Dendritic cell treated with granulocyte-macrophage colony-stimulating factor and Interleukin-4, amounts not matched to agents 40 ng/mL and 50 ng/mL, for 4 days (primary cell): ENCODE measurements at regions of chr22 and their contacts with region 1.

Region 1: GRCh38 chr22:31345331-31346254 is 553 bp downstream of the PATZ1 start:
- H3K4me3 Mint-ChIP-seq: peak overlapping the region; percentile 85
- H3K27ac Mint-ChIP-seq: peak overlapping the region; percentile 91
- H3K4me1 Mint-ChIP-seq: peaks cover 56% of the 10 kb centered on the region
- H3K27me3 Mint-ChIP-seq: peaks cover 9% of the 10 kb centered on the region

Region 2: DNA sequence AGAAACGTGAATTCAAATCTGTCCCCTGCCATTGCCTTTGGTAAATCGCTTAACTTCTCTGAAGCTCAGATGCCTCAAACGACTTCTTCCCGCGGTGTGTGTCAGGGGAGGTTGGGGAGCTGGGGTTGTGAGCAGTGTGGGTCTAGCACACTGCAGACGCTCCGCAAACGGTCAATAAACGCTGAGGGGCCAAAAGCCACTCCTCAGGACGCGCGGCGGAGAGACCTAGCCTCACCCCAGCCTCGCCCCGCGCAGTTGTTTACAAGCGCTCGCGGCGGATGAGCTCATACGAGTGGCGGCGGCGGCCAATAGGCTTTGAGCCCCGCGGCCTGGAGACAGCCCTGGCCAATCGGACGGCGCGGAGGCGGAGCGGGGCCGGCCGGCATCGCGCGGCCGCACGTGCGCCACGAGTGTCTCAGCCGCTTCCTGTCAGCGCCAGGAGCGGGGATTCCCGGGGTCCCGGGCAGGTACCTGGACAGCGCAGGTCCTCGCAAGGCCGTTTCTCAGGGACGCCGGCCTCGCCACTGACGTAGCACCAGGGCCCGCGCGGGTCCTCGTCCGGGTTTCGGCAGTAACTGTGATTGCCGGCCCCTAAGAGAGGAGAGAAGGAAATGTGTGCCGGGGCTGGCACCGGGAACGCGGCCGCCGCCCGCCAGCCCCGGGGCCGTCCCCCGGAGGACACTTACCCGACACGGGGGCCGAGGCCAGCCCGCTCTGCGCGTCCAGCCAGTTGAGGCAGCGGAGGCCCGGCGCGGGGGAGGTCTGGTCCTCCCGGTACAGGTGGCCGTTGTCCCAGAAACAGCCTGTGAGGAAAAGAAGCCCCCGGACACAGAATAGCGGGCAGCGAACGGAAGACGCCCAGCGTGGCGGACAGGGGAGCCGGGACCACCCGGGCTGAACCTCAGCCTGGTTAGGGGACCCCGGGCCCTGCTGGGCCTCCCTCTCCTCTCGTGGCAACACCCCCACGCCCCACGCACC is 54.8 kb before region 1 on chr22:
- intact Hi-C with region 1: loop called (anchors 5 kb)
- H3K4me3 Mint-ChIP-seq: peak overlapping the region; percentile 96
- H3K27ac Mint-ChIP-seq: peak overlapping the region; percentile 97
- H3K4me1 Mint-ChIP-seq: peaks cover 78% of the 10 kb centered on the region
- H3K27me3 Mint-ChIP-seq: no peaks in the 10 kb centered on the region

Region 3: GRCh38 chr22:31399211-31400028 is 53.8 kb after region 1 on chr22 and contains the start of gene DRG1:
- intact Hi-C with region 1: loop called (anchors 1 kb)
- H3K4me3 Mint-ChIP-seq: peak within 1 kb of the TSS; percentile 85
- H3K27ac Mint-ChIP-seq: peak within 1 kb of the TSS; percentile 90
- H3K4me1 Mint-ChIP-seq: peaks cover 7% of the 10 kb centered on the region
- H3K27me3 Mint-ChIP-seq: peaks cover under 1% of the 10 kb centered on the region